ENCODE measurements at regions of chr13 and their contacts with region 1.

Region 1: DNA sequence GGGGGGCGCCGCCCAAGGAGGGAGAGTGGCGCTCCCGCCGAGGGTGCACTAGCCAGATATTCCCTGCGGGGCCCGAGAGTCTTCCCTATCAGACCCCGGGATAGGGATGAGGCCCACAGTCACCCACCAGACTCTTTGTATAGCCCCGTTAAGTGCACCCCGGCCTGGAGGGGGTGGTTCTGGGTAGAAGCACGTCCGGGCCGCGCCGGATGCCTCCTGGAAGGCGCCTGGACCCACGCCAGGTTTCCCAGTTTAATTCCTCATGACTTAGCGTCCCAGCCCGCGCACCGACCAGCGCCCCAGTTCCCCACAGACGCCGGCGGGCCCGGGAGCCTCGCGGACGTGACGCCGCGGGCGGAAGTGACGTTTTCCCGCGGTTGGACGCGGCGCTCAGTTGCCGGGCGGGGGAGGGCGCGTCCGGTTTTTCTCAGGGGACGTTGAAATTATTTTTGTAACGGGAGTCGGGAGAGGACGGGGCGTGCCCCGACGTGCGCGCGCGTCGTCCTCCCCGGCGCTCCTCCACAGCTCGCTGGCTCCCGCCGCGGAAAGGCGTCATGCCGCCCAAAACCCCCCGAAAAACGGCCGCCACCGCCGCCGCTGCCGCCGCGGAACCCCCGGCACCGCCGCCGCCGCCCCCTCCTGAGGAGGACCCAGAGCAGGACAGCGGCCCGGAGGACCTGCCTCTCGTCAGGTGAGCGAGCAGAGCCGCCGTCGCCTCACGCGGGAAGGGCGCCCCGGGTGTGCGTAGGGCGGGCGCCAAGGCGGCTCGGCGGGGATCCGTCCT is at the start of gene RB1:
- DNase-seq: peak; percentile 96
- H3K4me3 ChIP-seq: peak within 1 kb of the TSS; percentile 88
- H3K27ac ChIP-seq: peak within 1 kb of the TSS; percentile 96
- H3K4me1 ChIP-seq: peaks cover 9% of the 10 kb centered on the region
- H3K27me3 ChIP-seq: no peaks in the 10 kb centered on the region
- CTCF ChIP-seq: no peak
- total RNA-seq, gene RB1: 52.9 and 57.1 TPM in 2 replicates

Region 2: GRCh38 chr13:48094781-48095502 is 208.6 kb before region 1 on chr13 and contains the start of gene MED4:
- CTCF ChIA-PET with region 1: no interaction called
- POLR2A ChIA-PET with region 1: no interaction called
- intact Hi-C with region 1: no loop called
- DNase-seq: peak; percentile 98
- H3K4me3 ChIP-seq: peak within 1 kb of the TSS; percentile 85
- H3K27ac ChIP-seq: peak within 1 kb of the TSS; percentile 95
- H3K4me1 ChIP-seq: peaks cover 15% of the 10 kb centered on the region
- H3K27me3 ChIP-seq: no peaks in the 10 kb centered on the region
- CTCF ChIP-seq: peak; percentile 99
- total RNA-seq, gene MED4: 51.6 and 51.7 TPM in 2 replicates

Region 3: GRCh38 chr13:48155848-48156247 is 147.7 kb before region 1 on chr13:
- CTCF ChIA-PET with region 1: no interaction called
- POLR2A ChIA-PET with region 1: no interaction called
- intact Hi-C with region 1: loop called (anchors 10 kb)
- DNase-seq: peak; percentile 72
- H3K4me3 ChIP-seq: no peak overlapping the region
- H3K27ac ChIP-seq: peak overlapping the region; percentile 6
- H3K4me1 ChIP-seq: peaks cover 39% of the 10 kb centered on the region
- H3K27me3 ChIP-seq: no peaks in the 10 kb centered on the region
- CTCF ChIP-seq: no peak

Region 4: DNA sequence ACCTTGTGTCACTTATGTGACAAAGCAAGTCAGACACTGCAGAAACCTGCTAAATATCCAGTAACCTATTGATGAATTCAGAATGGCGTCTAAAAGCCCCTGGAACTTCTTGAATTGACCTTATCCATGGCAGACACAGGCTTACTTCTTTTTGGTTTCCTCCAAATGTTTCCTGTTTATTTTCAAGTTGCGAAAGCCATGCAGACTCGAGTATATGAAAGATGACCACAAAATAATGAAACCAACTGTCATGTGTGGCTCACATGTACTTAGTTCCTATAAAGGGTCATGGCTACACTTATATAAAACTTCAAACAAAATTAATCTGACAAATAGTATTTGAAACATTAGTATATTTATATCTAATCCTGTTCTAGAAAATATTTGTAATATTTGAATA is 559.0 kb after region 1 on chr13:
- CTCF ChIA-PET with region 1: no interaction called
- POLR2A ChIA-PET with region 1: no interaction called
- intact Hi-C with region 1: no loop called
- DNase-seq: no peak
- H3K4me3 ChIP-seq: no peak overlapping the region
- H3K27ac ChIP-seq: no peak overlapping the region
- H3K4me1 ChIP-seq: no peaks in the 10 kb centered on the region
- H3K27me3 ChIP-seq: no peaks in the 10 kb centered on the region
- CTCF ChIP-seq: no peak

Measured in A673 (cell line).